ENCODE measurements at regions of chr20 and their contacts with region 1.

Region 1: GRCh38 chr20:8722276-8722928 is 346.5 kb upstream of the PLCB4 start:
- DNase-seq: peak; percentile 42
- H3K4me3 ChIP-seq: no peak overlapping the region
- H3K27ac ChIP-seq: no peak overlapping the region
- H3K4me1 ChIP-seq: no peaks in the 10 kb centered on the region
- H3K27me3 ChIP-seq: no peaks in the 10 kb centered on the region
- CTCF ChIP-seq: peak; percentile 78 to 84

Region 2: GRCh38 chr20:7935027-7935551 is 787.3 kb before region 1 on chr20:
- CTCF ChIA-PET with region 1: interaction called, 19 read pairs
- dilution Hi-C with region 1: no loop called
- in situ Hi-C with region 1: loop called in 1 of 2 experiments (anchors 25 kb)
- intact Hi-C with region 1: loop called (anchors 1 kb)
- DNase-seq: no peak
- H3K4me3 ChIP-seq: no peak overlapping the region
- H3K27ac ChIP-seq: no peak overlapping the region
- H3K4me1 ChIP-seq: peaks cover 12% of the 10 kb centered on the region
- H3K27me3 ChIP-seq: no peaks in the 10 kb centered on the region
- CTCF ChIP-seq: no peak

Region 3: DNA sequence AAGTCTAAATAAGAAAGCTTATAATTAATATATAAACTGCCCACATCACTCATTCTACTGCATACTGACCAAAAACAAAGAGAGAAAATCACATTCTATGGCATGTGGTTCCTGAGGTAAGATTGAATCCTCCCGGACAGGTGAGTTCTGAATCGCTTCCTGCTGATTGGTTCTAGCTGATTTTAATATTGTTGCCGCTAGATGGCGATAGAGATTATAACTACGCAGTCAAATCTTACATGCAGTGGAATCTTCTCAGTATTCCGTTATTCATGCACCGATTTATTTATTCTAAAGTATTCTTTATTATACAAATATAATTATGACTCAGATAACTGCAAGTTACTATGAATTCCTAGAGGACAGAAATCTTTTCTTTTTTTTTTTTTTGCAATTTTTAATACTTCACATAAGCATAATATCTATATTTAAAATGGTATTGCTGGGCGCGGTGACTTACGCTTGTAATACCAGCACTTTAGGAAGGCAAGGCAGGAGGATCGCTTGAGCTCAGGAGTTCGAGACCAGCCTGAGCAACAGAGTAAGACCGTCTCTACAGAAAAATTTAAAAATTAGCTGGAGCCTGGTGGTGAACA is 678.6 kb before region 1 on chr20:
- CTCF ChIA-PET with region 1: interaction called, 5 read pairs
- dilution Hi-C with region 1: no loop called
- in situ Hi-C with region 1: loop called in 1 of 2 experiments (anchors 10 kb)
- intact Hi-C with region 1: loop called (anchors 1 kb)
- DNase-seq: peak; percentile 53
- H3K4me3 ChIP-seq: no peak overlapping the region
- H3K27ac ChIP-seq: no peak overlapping the region
- H3K4me1 ChIP-seq: no peaks in the 10 kb centered on the region
- H3K27me3 ChIP-seq: peaks cover 6% of the 10 kb centered on the region
- CTCF ChIP-seq: peak; percentile 60 to 65

Region 4: DNA sequence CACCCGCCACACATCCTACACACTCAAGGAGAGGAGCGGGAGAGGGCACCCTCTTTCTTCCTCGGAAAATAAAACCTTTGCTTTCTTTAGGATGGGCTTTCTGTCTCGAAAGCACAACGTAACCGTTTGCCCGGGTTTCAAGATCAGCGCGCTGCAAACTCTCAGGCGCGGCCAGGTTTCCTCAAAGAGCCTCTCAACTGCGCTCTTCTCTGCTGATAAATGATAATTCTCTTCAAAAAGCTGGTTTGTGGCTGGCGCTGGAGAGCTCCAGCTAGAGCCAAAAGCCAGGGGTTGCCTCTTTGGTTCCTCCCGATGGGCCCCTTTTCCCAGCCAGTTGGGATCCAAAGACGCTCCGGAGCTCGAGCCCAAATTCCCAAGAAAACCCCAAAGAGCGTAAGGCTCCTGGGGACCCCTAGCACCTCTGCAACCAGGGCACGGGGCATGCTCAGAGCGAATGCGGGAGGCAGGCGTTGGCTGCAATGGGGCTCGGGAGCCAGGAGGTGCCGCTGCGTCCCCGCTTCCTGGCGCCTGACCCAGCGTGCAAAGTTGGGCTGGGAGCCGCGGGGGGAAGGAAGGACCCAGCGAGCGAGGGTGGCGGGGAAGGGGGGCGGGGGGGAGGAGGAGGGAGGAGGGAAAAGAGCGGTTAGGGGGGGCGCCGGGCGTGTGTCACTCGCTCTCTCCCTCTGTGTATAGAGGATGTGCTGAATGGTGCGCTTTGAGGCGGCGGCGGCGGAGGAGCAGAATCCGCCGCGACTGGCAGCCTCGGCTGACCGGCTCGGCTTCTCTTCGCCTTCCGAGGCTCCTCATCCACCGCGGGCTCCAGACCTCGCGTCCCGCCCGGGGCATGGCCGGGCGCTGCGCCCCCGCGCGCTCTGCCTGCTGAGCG is 590.6 kb before region 1 on chr20 and contains the start of gene PLCB1:
- CTCF ChIA-PET with region 1: interaction called, 3 read pairs
- dilution Hi-C with region 1: loop called (anchors 25 kb)
- in situ Hi-C with region 1: loop called in 1 of 2 experiments (anchors 10 kb)
- intact Hi-C with region 1: loop called (anchors 1 kb)
- DNase-seq: peak; percentile 48
- H3K4me3 ChIP-seq: peak within 1 kb of the TSS; percentile 39 to 50 (median 44)
- H3K27ac ChIP-seq: no peak within 1 kb of the TSS
- H3K4me1 ChIP-seq: peaks cover 10% of the 10 kb centered on the region
- H3K27me3 ChIP-seq: peaks cover 8% of the 10 kb centered on the region
- CTCF ChIP-seq: peak; percentile 83 to 84
- total RNA-seq, gene PLCB1: 0.31 to 3.3 TPM

Region 5: GRCh38 chr20:8305449-8305978 is 416.9 kb before region 1 on chr20:
- CTCF ChIA-PET with region 1: no interaction called
- dilution Hi-C with region 1: no loop called
- in situ Hi-C with region 1: no loop called
- intact Hi-C with region 1: loop called (anchors 5 kb)
- DNase-seq: peak; percentile 58
- H3K4me3 ChIP-seq: no peak overlapping the region
- H3K27ac ChIP-seq: no peak overlapping the region
- H3K4me1 ChIP-seq: no peaks in the 10 kb centered on the region
- H3K27me3 ChIP-seq: no peaks in the 10 kb centered on the region
- CTCF ChIP-seq: peak; percentile 77 to 81

Region 6: DNA sequence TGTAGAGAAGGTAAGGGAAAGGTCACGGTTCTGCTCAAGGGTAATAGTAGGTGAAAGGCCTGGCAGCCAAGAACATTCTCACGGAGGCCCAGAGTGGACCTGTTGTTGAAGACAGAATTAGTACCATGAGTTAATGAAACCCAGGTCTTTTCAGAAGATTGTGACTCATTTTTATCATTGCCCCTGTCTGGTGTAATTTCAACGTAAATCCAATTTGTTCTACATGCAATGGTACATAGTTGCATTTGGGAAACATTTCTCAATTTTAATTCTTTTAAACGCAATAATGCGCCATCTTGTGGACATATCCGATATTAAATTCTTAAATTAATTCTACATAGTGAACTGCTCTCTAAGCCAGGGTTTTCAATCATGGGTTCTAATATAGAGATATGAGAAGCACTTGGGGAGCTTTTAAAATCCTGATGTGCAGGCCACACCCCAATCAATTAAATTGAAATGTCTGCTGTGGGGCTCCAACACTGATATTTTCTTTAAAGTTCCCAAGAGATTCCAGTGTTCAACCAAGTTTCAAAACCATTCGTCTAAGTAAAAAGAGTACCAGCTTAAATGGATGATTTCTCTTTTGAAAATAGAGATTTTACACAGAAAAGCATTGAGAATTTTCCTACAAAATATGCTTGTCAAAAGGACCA is 332.9 kb before region 1 on chr20:
- CTCF ChIA-PET with region 1: no interaction called
- dilution Hi-C with region 1: no loop called
- in situ Hi-C with region 1: loop called in 1 of 2 experiments (anchors 25 kb)
- intact Hi-C with region 1: loop called (anchors 1 kb)
- DNase-seq: peak; percentile 9
- H3K4me3 ChIP-seq: no peak overlapping the region
- H3K27ac ChIP-seq: no peak overlapping the region
- H3K4me1 ChIP-seq: no peaks in the 10 kb centered on the region
- H3K27me3 ChIP-seq: no peaks in the 10 kb centered on the region
- CTCF ChIP-seq: peak; percentile 35 to 40

Measured in mammary epithelial cell (primary cell).